ENCODE measurements at regions of chr16 and their contacts with region 1.

Region 1: GRCh38 chr16:75614066-75614897 is 8.8 kb downstream of the ADAT1 start:
- DNase-seq: no peak
- ATAC-seq: no peak
- H3K4me3 Mint-ChIP-seq: no peak overlapping the region
- H3K27ac Mint-ChIP-seq: no peak overlapping the region
- H3K4me1 Mint-ChIP-seq: peaks cover 23% of the 10 kb centered on the region
- H3K27me3 Mint-ChIP-seq: no peaks in the 10 kb centered on the region

Region 2: GRCh38 chr16:75593825-75594820 is 20.2 kb before region 1 on chr16:
- CTCF ChIA-PET with region 1: no interaction called
- POLR2A ChIA-PET with region 1: no interaction called
- intact Hi-C with region 1: loop called (anchors 1 to 2 kb)
- DNase-seq: peak; percentile 42
- ATAC-seq: peak; percentile 83
- H3K4me3 Mint-ChIP-seq: no peak overlapping the region
- H3K27ac Mint-ChIP-seq: peak overlapping the region; percentile 71
- H3K4me1 Mint-ChIP-seq: peaks cover 14% of the 10 kb centered on the region
- H3K27me3 Mint-ChIP-seq: no peaks in the 10 kb centered on the region

Region 3: DNA sequence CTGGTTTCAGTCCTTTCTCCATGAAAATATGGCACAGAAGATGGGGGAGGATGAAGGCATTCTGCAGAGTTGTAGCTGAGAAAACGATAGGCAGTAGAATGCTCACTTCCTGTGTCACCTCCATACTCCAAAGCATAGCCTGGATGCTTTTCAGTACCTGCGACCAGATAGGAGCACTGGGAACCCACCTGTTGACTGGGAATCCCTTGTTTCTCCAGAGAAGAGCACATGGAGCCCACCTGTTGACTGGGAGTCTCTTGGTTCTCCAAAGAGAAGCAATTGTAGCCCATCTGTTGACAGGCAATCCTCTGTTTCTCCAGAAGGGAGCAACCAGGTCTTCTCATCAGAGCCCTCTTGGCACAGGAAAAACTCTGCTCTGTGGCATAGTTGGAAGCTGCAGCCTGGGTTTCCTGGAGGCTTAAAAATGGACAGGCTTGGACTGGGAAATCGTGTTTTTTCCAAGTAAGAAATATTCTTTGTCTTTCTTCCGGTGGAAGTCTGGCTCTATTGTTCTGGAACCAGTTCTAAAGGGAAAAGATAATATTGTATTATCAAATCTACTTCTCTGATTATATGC is 46.5 kb after region 1 on chr16:
- CTCF ChIA-PET with region 1: interaction called, 3 read pairs
- POLR2A ChIA-PET with region 1: interaction called, 13 read pairs
- intact Hi-C with region 1: no loop called
- DNase-seq: no peak
- ATAC-seq: no peak
- H3K4me3 Mint-ChIP-seq: no peak overlapping the region
- H3K27ac Mint-ChIP-seq: no peak overlapping the region
- H3K4me1 Mint-ChIP-seq: peaks cover 4% of the 10 kb centered on the region
- H3K27me3 Mint-ChIP-seq: no peaks in the 10 kb centered on the region

Measured in activated CD4-positive, alpha-beta T cell treated with anti-CD3 and anti-CD28 coated beads for 36 hours (primary cell).